CD4-positive, alpha-beta memory T cell (primary cell): ENCODE measurements at regions of chr22 and their contacts with region 1.

Region 1: DNA sequence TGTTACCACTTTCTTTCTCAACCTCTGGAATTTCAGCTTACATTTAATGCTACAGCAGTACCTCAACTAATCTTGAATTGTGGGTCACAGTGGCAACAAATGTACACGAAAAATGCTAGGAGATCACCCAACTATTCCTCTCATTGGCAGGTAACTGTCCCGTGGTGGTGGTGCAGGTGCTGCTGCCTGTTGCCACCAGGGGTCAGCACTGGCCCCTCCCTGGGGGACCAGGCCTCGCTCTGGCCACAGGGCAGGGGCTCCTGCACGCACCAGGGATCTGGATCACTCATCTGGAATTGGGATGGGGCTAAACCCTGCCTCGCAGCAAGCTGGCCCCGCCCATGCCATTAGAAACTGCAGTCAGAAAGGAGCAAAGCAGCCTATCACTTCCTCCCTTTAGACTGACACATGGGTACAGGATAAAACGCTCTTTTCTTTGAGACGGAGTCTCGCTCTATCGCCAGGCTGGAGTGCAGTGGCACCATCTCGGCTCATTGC is 6.9 kb upstream of the POLDIP3 start:
- DNase-seq: peak in 4 of 5 donors; percentile 36 to 53 (median 47)
- H3K4me3 ChIP-seq: no peak overlapping the region
- H3K4me3 Mint-ChIP-seq: no peak overlapping the region
- H3K27ac ChIP-seq: no peak overlapping the region
- H3K27ac Mint-ChIP-seq: peak overlapping the region; percentile 36 to 86 (median 59)
- H3K4me1 ChIP-seq: no peaks in the 10 kb centered on the region
- H3K4me1 Mint-ChIP-seq: peaks cover 5 to 13% (median 6%) of the 10 kb centered on the region in 4 donors
- H3K27me3 ChIP-seq: no peaks in the 10 kb centered on the region
- H3K27me3 Mint-ChIP-seq: no peaks in the 10 kb centered on the region

Region 2: GRCh38 chr22:42635531-42635930 is 14.0 kb after region 1 on chr22:
- CTCF ChIA-PET with region 1: interaction called, 19 read pairs
- POLR2A ChIA-PET with region 1: interaction called, 5 read pairs
- intact Hi-C with region 1: no loop called
- DNase-seq: no peak
- H3K4me3 ChIP-seq: no peak overlapping the region
- H3K4me3 Mint-ChIP-seq: no peak overlapping the region
- H3K27ac ChIP-seq: no peak overlapping the region
- H3K27ac Mint-ChIP-seq: no peak overlapping the region
- H3K4me1 ChIP-seq: no peaks in the 10 kb centered on the region
- H3K4me1 Mint-ChIP-seq: peaks cover 0 to 3% (median 2%) of the 10 kb centered on the region in 4 donors
- H3K27me3 ChIP-seq: no peaks in the 10 kb centered on the region
- H3K27me3 Mint-ChIP-seq: no peaks in the 10 kb centered on the region

Region 3: DNA sequence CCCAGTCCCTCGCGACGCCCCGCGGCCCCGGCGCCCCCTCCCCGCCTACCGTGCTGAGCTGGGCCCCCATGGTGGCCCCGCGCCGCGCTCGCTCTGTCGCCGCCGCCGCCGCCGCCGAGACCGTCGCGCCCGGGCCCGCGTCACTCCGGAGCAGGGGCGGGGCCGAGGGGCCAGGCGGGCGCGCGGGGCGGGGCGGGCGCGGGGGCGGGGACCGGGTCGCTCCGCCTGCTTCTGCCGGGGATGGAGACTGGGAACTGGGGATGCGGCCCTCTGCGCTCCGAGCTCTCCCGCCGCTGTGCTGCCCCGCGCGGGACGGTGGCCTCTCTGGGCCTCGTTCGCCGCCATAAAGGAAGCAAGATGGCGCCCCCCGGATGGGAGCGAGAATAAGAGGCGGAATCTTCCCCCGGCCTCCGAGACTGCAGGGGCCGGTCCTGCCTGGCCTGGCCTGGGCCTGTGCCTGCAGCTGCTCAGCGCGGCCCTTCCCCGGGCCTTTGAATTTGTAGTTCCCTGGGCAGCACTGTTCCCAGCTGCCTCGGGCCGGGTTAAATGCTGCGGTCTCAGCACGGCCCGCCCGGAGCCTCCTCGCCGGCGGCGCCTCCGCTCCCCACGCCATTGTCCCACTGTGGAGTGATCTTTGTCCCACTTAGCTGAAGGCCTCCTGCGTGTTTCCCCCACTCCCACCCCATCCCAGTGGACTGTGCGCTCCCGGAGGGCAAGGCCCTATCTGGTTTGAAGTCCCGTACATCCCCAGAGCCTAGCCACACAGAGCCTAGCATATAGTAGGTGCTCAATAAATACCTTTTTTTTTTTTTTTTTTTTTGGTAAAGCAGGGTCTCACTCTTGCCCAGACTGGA is 27.9 kb after region 1 on chr22 and contains the start of gene CYB5R3:
- CTCF ChIA-PET with region 1: interaction called, 18 read pairs
- POLR2A ChIA-PET with region 1: interaction called, 59 read pairs
- intact Hi-C with region 1: no loop called
- DNase-seq: peak; percentile 68 to 77 (median 76)
- H3K4me3 ChIP-seq: peak within 1 kb of the TSS; percentile 67 to 86
- H3K4me3 Mint-ChIP-seq: peak within 1 kb of the TSS; percentile 98 to 100 (median 99)
- H3K27ac ChIP-seq: peak within 1 kb of the TSS; percentile 69
- H3K27ac Mint-ChIP-seq: peak within 1 kb of the TSS; percentile 90 to 100 (median 100)
- H3K4me1 ChIP-seq: peaks cover 42% of the 10 kb centered on the region
- H3K4me1 Mint-ChIP-seq: peaks cover 10 to 42% (median 25%) of the 10 kb centered on the region in 4 donors
- H3K27me3 ChIP-seq: no peaks in the 10 kb centered on the region
- H3K27me3 Mint-ChIP-seq: peaks cover 2% of the 10 kb centered on the region in 2 donors
- total RNA-seq, gene CYB5R3: 42.7 to 43.2 TPM

Region 4: GRCh38 chr22:42901790-42902508 is 280.4 kb after region 1 on chr22:
- CTCF ChIA-PET with region 1: no interaction called
- POLR2A ChIA-PET with region 1: no interaction called
- intact Hi-C with region 1: no loop called
- DNase-seq: no peak
- H3K4me3 ChIP-seq: no peak overlapping the region
- H3K4me3 Mint-ChIP-seq: no peak overlapping the region
- H3K27ac ChIP-seq: no peak overlapping the region
- H3K27ac Mint-ChIP-seq: no peak overlapping the region
- H3K4me1 ChIP-seq: no peaks in the 10 kb centered on the region
- H3K4me1 Mint-ChIP-seq: peaks cover 11 to 17% (median 14%) of the 10 kb centered on the region in 4 donors
- H3K27me3 ChIP-seq: no peaks in the 10 kb centered on the region
- H3K27me3 Mint-ChIP-seq: no peaks in the 10 kb centered on the region